Stomach (tissue), 19 donors: ENCODE measurements at regions of chr12 and their contacts with region 1.

Region 1: GRCh38 chr12:13534645-13535398 is 338.3 kb downstream of the EMP1 start:
- DNase-seq: peak; percentile 79 to 80
- H3K4me3 ChIP-seq: peak overlapping the region in 1 of 4 donors; percentile 7
- H3K27ac ChIP-seq: no peak overlapping the region
- H3K4me1 ChIP-seq: peaks cover 0 to 7% (median 0%) of the 10 kb centered on the region in 4 donors
- H3K27me3 ChIP-seq: no peaks in the 10 kb centered on the region
- CTCF ChIP-seq: peak in 5 of 7 experiments; percentile 69 to 82 (median 81)
- EP300 ChIP-seq: no peak
- POLR2A ChIP-seq: no peak

Region 2: GRCh38 chr12:13289653-13290289 is 245.1 kb before region 1 on chr12:
- intact Hi-C with region 1: loop called (anchors 10 kb)
- DNase-seq: no peak
- H3K4me3 ChIP-seq: no peak overlapping the region
- H3K27ac ChIP-seq: no peak overlapping the region
- H3K4me1 ChIP-seq: peaks cover 0 to 8% (median 3%) of the 10 kb centered on the region in 4 donors
- H3K27me3 ChIP-seq: no peaks in the 10 kb centered on the region
- CTCF ChIP-seq: no peak
- EP300 ChIP-seq: no peak
- POLR2A ChIP-seq: no peak

Region 3: DNA sequence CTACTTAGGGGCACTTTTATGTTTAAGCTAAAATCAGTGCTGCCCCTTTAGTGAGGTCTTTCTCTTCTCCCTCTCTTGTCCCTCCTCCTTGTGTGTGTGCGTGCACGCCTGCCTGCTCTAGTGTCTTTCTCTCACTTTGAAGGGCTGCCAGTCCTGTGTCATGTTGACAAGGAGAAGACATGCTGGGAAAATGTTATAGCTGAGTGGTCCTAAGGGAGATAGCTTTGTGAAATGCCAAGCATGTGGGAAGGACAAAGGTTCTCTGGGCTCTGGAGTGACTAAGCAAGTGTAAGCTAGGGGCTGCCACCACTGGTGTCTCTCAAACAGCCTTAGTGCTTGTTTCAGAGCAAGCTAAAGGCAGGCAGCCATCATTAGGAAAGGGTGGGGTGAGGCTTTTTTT is 229.9 kb before region 1 on chr12:
- intact Hi-C with region 1: no loop called
- DNase-seq: no peak
- H3K4me3 ChIP-seq: no peak overlapping the region
- H3K27ac ChIP-seq: no peak overlapping the region
- H3K4me1 ChIP-seq: no peaks in the 10 kb centered on the region
- H3K27me3 ChIP-seq: no peaks in the 10 kb centered on the region
- CTCF ChIP-seq: no peak
- EP300 ChIP-seq: no peak
- POLR2A ChIP-seq: no peak

Region 4: GRCh38 chr12:13362260-13362841 is 172.5 kb before region 1 on chr12:
- intact Hi-C with region 1: loop called (anchors 10 kb)
- DNase-seq: peak; percentile 80 to 85
- H3K4me3 ChIP-seq: no peak overlapping the region
- H3K27ac ChIP-seq: no peak overlapping the region
- H3K4me1 ChIP-seq: no peaks in the 10 kb centered on the region
- H3K27me3 ChIP-seq: no peaks in the 10 kb centered on the region
- CTCF ChIP-seq: peak in 5 of 7 experiments; percentile 68 to 85 (median 73)
- EP300 ChIP-seq: no peak
- POLR2A ChIP-seq: no peak